ENCODE measurements at regions of chr17 and their contacts with region 1.

Region 1: DNA sequence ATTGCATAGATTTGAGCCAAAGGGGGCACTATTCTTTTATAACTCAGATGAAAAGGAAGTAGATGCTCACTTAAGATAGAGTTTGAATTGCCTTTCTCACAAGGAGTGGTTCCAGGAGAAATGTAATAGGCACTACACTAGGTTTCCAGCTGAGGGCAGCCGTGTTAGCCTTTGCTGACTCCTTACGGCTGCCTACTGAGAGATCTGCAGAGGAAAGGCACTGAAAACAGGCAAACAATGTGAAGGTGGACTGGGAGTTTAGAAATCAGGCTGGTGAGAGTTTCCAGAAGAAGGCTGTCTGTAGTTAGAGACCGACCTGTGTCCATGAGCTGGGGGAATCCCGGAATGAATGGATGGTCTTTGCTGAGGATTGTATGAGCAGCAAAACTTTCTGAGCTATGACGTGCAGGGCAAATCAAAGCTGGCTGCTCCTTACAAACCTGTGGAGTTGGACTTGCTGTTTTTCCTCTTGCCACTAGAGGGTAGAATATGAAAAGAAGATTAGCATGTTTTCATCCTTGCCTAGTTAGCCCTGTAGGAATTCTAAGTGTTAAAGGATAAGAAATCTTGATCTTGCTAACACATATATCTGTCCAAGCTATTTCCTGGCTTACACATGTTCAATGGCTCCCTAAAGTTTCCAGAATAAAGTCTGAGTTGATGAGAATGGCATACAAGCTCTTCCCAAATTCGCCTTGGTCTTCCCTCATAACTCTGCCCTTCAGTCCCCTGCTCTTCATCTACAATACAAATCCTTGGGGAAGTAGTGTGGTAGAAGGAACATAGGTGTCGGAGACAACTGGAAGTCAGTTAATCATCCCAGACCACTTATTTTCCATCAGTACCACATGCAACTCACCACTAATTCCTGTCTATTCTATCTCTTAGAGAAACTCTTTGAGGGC is 20.1 kb upstream of the TAOK1 start:
- DNase-seq: peak; percentile 51
- H3K4me3 Mint-ChIP-seq: no peak overlapping the region
- H3K27ac Mint-ChIP-seq: no peak overlapping the region
- H3K4me1 Mint-ChIP-seq: no peaks in the 10 kb centered on the region
- H3K27me3 Mint-ChIP-seq: no peaks in the 10 kb centered on the region

Region 2: DNA sequence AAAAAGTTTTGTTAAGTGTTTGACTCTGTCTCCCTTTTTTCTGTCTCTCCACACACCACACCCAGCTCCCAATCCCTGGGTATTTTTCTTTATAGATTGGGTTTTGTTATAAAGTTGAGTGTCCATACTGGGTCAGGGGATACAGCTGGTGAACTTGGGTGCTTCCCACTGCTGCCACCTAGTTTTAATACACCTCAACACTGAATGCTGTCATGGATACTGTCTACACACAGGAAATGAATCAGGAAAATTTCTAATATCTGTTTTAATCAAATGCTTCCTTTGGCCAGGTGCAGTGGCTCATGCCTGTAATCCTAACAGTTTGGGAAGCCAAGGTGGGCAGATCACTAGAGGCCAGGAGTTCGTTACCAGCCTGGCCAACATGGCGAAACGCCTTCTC is 14.8 kb after region 1 on chr17:
- CTCF ChIA-PET with region 1: interaction called, 47 read pairs
- POLR2A ChIA-PET with region 1: interaction called, 6 read pairs
- DNase-seq: no peak
- H3K4me3 Mint-ChIP-seq: no peak overlapping the region
- H3K27ac Mint-ChIP-seq: no peak overlapping the region
- H3K4me1 Mint-ChIP-seq: peaks cover 9% of the 10 kb centered on the region
- H3K27me3 Mint-ChIP-seq: no peaks in the 10 kb centered on the region

Region 3: GRCh38 chr17:29483503-29483902 is 113.4 kb after region 1 on chr17:
- CTCF ChIA-PET with region 1: interaction called, 15 read pairs
- POLR2A ChIA-PET with region 1: no interaction called
- DNase-seq: no peak
- H3K4me3 Mint-ChIP-seq: no peak overlapping the region
- H3K27ac Mint-ChIP-seq: no peak overlapping the region
- H3K4me1 Mint-ChIP-seq: no peaks in the 10 kb centered on the region
- H3K27me3 Mint-ChIP-seq: no peaks in the 10 kb centered on the region

Region 4: GRCh38 chr17:29568331-29569244 is 198.5 kb after region 1 on chr17 and contains the start of gene TP53I13:
- CTCF ChIA-PET with region 1: interaction called, 33 read pairs
- POLR2A ChIA-PET with region 1: interaction called, 14 read pairs
- DNase-seq: peak; percentile 91
- H3K4me3 Mint-ChIP-seq: peak within 1 kb of the TSS; percentile 92
- H3K27ac Mint-ChIP-seq: peak within 1 kb of the TSS; percentile 96
- H3K4me1 Mint-ChIP-seq: peaks cover 36% of the 10 kb centered on the region
- H3K27me3 Mint-ChIP-seq: no peaks in the 10 kb centered on the region
- total RNA-seq, gene TP53I13: 112 to 118 TPM